H1 (cell line): ENCODE measurements at regions of chr9 and their contacts with region 1.

Region 1: DNA sequence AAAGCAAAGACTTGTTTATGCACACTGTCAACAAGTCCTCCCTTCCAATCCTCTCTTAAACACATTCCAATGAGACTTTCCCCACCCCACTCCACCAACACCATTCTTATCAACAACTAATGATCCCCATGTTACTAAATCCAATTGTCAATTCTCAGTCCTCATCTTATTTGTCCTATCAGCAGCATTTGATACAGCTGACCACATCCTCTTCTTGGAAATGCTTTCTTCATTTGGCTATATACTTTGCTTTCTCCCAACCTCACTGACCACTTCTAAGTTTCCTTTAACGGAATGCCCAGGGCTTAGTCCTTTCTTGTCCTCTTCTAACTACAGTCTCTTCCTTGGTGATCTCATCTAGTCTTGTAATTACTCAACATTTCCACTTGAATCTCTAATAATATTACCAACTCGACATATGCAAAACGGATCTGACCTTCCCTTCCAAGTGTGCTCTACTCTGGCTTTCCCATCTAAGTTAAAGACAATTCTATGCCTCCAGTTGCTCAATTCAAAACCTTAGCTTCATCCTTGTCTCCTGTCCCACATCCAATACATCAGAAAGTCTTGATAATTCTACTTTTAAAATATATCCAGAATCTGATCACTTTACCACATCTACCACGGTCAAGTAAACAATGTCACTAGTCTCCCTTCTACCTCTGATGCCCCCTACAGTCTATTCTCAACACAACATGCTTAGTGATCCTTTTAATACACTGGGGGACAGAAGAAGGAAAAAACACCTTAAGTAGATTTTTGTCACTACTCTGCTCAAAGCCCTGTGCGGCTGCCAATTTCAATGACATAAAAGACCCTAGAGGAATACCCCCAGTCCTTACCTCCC is 25.5 kb downstream of the AGTPBP1 start:
- DNase-seq: no peak
- H3K4me3 ChIP-seq: no peak overlapping the region
- H3K27ac ChIP-seq: no peak overlapping the region
- H3K4me1 ChIP-seq: no peaks in the 10 kb centered on the region
- H3K27me3 ChIP-seq: no peaks in the 10 kb centered on the region
- CTCF ChIP-seq: peak in 2 of 3 experiments; percentile 22 to 51; a peak in 2 of 4 replicates
- EP300 ChIP-seq: no peak
- POLR2A ChIP-seq: no peak
- RAD21 ChIP-seq: peak; percentile 15 to 30; a peak in 3 of 4 replicates

Region 2: DNA sequence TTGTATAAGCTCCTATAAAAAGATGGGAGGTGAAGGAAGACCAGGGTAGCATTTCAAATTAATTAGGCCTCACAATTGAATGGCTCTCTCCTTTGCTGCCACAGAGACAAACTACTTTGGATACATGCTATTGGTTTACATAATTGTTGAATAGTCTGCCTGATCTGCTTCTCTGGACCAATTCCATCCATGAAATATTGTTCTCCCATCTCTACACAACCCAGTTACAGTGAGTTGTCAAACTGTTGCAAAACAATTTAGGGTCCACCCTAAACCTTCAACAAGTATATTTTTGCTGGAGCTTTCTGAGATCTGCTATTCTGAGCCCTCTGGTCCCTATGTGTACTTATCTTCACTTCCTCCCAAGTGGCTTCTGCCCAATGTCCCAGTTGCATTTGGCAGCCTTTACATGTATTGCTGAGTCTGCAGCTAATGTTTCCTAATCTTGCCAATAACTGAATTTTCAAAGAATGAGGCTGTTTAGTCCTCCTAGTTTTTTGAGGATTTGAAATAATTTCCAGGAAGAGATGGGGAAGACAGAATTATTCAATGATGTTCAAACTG is 13.4 kb before region 1 on chr9:
- CTCF ChIA-PET with region 1: interaction called, 11 read pairs
- POLR2A ChIA-PET with region 1: no interaction called
- DNase-seq: no peak
- H3K4me3 ChIP-seq: no peak overlapping the region
- H3K27ac ChIP-seq: no peak overlapping the region
- H3K4me1 ChIP-seq: no peaks in the 10 kb centered on the region
- H3K27me3 ChIP-seq: no peaks in the 10 kb centered on the region
- CTCF ChIP-seq: no peak
- EP300 ChIP-seq: no peak
- POLR2A ChIP-seq: no peak
- RAD21 ChIP-seq: no peak

Region 3: DNA sequence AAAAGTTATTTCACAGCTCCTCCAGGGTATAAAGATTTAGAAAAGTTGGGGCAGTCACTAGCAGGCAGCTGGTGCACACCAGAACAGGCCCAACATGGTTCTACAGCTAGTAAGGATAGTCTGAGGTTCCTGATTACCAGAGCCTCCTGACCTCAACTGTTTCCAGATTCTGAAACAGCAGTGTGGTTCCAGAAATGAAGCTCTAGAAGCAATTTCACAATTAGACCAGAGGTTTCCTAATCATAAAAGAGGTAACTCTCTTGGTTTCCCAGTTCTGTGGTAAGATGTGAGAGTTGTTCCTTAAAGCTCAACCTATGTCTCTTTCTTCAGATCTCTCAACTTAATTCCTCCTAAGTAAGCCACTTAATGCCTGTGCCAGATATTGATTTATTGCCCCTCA is 13.6 kb after region 1 on chr9:
- CTCF ChIA-PET with region 1: interaction called, 11 read pairs
- POLR2A ChIA-PET with region 1: no interaction called
- DNase-seq: no peak
- H3K4me3 ChIP-seq: no peak overlapping the region
- H3K27ac ChIP-seq: no peak overlapping the region
- H3K4me1 ChIP-seq: peaks cover 0 to 2% (median 0%) of the 10 kb centered on the region in 4 experiments; a peak in 1 of 7 replicates
- H3K27me3 ChIP-seq: no peaks in the 10 kb centered on the region
- CTCF ChIP-seq: no peak
- EP300 ChIP-seq: no peak
- POLR2A ChIP-seq: no peak
- RAD21 ChIP-seq: no peak